ENCODE measurements at regions of chr12 and their contacts with region 1.

Region 1: DNA sequence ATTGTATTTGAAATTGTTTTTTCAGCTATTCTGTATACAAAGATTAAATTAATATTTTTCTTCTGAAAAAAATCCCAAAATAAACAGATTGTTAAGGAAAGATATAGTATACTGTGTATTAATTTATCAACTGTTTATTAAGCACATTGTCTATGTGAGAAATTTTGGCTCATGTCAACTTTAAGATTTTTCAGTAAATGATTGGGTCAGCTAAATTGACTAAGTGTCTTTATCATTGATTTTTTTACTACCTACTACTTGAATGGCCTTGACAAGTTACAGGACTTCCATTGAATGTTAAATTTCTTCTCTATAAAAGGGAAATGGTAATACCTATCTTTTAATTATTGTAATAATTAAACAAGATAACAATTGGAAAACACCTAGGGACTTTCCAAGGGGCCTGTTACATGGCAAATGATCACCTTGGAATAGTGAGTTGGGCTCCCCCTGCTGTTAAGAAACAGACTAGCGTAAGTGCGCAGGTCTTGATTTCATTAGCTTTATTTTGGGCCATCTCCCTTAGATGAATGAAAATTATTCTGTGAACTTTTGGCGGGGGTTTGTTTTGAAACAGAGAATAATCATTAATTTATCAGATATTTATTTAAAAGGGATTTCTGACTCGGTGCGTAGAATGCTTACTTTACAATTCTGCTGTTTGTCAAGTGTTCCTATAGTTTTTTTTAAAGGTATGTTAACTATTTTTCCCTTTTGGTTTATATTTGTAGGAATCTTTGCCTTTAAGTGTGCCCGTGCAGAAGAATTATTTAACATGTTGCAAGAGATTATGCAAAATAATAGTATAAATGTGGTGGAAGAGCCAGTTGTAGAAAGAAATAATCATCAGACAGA is 14.5 kb upstream of the CCT2 start:
- DNase-seq: no peak
- H3K4me3 ChIP-seq: no peak overlapping the region
- H3K27ac ChIP-seq: no peak overlapping the region
- H3K4me1 ChIP-seq: peaks cover 18% of the 10 kb centered on the region
- H3K27me3 ChIP-seq: no peaks in the 10 kb centered on the region
- CTCF ChIP-seq: peak; percentile 86

Region 2: DNA sequence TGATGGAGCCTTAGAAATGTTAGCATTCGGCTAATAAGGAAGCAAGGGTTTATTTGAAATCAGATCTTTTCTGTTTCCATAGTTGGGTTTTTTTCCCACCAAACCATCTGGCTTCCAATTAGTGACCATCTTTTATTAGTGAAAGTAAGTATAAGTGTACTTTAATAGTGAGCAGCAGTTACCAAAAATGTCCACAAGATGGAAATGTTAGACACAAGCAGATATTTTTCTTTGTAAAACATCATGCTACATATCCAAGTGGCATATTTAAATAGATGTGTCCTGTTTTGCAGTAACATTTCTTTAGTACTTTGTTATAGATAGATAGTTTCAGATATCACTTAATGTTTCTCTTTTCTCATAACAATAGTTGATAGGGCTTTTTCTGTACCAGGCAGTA is 182.4 kb before region 1 on chr12:
- intact Hi-C with region 1: loop called (anchors 10 kb)
- DNase-seq: no peak
- H3K4me3 ChIP-seq: no peak overlapping the region
- H3K27ac ChIP-seq: no peak overlapping the region
- H3K4me1 ChIP-seq: no peaks in the 10 kb centered on the region
- H3K27me3 ChIP-seq: no peaks in the 10 kb centered on the region
- CTCF ChIP-seq: peak; percentile 68

Region 3: GRCh38 chr12:69470189-69471075 is 100.3 kb before region 1 on chr12 and contains the start of gene FRS2:
- intact Hi-C with region 1: loop called (anchors 2 kb)
- DNase-seq: peak; percentile 91
- H3K4me3 ChIP-seq: peak within 1 kb of the TSS; percentile 85
- H3K27ac ChIP-seq: peak within 1 kb of the TSS; percentile 93
- H3K4me1 ChIP-seq: peaks cover 56% of the 10 kb centered on the region
- H3K27me3 ChIP-seq: no peaks in the 10 kb centered on the region
- CTCF ChIP-seq: peak; percentile 38
- total RNA-seq, gene FRS2: 18.2 TPM